HAP-1 (cell line): ENCODE measurements at regions of chr20 and their contacts with region 1.

Region 1: GRCh38 chr20:31951530-31952453 is at the start of gene PDRG1:
- DNase-seq: peak; percentile 94 to 97
- H3K4me3 ChIP-seq: peak within 1 kb of the TSS; percentile 89
- H3K4me1 ChIP-seq: no peaks in the 10 kb centered on the region; the same call in 1 of the 2 replicates
- H3K27me3 ChIP-seq: peaks cover 9% of the 10 kb centered on the region

Region 2: GRCh38 chr20:31698803-31699718 is 252.7 kb before region 1 on chr20:
- in situ Hi-C with region 1: no loop called
- DNase-seq: no peak
- H3K4me3 ChIP-seq: no peak overlapping the region
- H3K4me1 ChIP-seq: no peaks in the 10 kb centered on the region
- H3K27me3 ChIP-seq: no peaks in the 10 kb centered on the region

Region 3: DNA sequence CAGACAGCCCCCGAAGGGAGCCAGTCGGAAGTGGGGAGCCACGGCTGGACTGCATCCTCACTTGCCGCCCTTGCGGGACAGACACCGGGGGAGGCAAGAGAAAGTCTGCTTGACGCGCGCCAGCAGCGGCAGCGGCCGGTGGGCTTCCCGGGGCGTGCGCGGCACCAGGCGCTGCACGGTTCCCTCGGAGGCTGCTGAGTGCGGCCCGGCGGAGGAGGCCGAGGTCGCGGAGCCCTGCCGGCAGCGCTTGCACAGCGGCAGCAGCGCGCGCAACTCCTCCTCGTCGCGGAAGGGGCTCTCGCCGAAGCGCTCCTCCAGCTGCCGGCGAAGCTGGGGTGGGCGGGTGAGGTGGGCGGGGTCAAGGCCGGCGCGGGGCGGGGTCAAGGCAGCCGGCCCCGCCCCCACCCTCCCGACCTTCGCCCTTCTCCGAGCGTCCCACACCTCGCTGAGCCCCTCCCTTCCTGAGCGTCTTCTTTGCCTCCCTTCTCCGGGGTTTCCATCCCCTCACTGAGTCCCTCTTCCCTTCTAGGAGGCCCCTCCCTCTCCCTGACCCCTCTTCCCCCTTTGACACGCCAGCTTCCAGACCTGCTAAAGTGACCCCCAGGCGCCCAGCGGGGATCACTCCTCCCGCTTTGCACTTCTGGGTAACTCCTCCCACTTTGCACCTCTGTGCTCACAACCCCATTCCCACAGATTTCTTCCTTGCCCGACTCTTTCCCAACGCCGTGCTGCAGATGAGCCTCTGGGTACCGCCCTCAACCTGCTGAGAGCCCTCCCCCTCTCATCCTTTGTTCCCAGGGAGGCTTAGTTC is 90.2 kb before region 1 on chr20:
- in situ Hi-C with region 1: loop called (anchors 5 kb)
- DNase-seq: peak; percentile 76 to 88
- H3K4me3 ChIP-seq: peak overlapping the region; percentile 45
- H3K4me1 ChIP-seq: peaks cover 10% of the 10 kb centered on the region
- H3K27me3 ChIP-seq: no peaks in the 10 kb centered on the region

Region 4: GRCh38 chr20:32207626-32208498 is 256.1 kb after region 1 on chr20 and contains the starts of genes PLAGL2 and POFUT1:
- in situ Hi-C with region 1: no loop called
- DNase-seq: peak; percentile 86 to 92
- H3K4me3 ChIP-seq: peak within 1 kb of the TSS; percentile 99
- H3K4me1 ChIP-seq: peaks cover 28% of the 10 kb centered on the region
- H3K27me3 ChIP-seq: no peaks in the 10 kb centered on the region

Region 5: DNA sequence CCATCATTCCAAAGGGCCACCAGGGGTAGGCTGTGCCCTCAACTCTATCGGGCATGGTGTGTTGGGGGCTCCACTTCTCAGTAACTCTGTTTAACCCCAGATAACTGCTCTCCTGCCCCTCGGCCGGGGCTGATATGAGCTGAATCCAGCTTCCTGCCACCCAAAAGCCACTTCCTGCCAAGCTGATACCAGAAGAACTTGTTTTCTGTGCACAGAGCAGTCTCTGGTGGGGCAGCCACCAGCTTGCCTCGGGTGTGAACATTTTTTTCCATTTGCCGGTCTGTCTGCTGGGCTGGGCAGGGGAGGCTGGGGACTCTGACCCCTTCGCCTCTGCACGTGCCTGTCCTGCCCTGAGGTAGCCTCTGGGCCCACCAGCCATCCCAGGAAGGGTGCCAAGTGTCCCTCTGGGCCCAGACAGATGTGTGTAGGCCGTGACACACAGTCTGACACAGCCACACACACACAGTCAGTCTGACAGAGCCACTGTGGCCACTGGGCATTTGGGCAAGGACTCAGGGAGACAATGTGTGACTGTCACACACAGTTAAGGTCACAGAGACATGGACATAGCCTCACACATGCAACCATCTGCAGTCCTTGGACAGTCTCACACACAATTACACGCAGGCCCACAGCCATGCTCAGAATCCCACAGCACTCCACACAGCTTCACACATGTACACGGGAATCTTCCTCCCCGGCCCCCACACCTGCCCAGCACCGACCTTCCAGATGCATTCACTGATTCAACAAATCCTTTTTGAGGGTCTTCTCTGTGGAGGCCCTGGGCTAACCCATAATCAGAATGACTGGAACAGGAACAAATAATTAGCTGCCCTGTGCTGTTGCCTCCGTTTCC is 588.3 kb after region 1 on chr20:
- in situ Hi-C with region 1: no loop called
- DNase-seq: no peak
- H3K4me3 ChIP-seq: no peak overlapping the region
- H3K4me1 ChIP-seq: peaks cover 12% of the 10 kb centered on the region
- H3K27me3 ChIP-seq: no peaks in the 10 kb centered on the region